Activated CD8-positive, alpha-beta memory T cell treated with anti-CD3 and anti-CD28 coated beads, Interleukin-2, amount 10 ng/mL, durations not matched to agents 7 days and 5 days (primary cell): ENCODE measurements at regions of chr13 and their contacts with region 1.

Region 1: GRCh38 chr13:48580185-48580803 is 47.4 kb upstream of the RCBTB2 start:
- DNase-seq: peak; percentile 80
- ATAC-seq: peak; percentile 51
- H3K4me3 Mint-ChIP-seq: no peak overlapping the region
- H3K27ac Mint-ChIP-seq: no peak overlapping the region
- H3K4me1 Mint-ChIP-seq: peaks cover 43% of the 10 kb centered on the region
- H3K27me3 Mint-ChIP-seq: peaks cover 44% of the 10 kb centered on the region

Region 2: GRCh38 chr13:48334534-48335127 is 245.7 kb before region 1 on chr13:
- CTCF ChIA-PET with region 1: interaction called, 110 read pairs
- DNase-seq: no peak
- ATAC-seq: peak; percentile 72
- H3K4me3 Mint-ChIP-seq: no peak overlapping the region
- H3K27ac Mint-ChIP-seq: no peak overlapping the region
- H3K4me1 Mint-ChIP-seq: peaks cover 21% of the 10 kb centered on the region
- H3K27me3 Mint-ChIP-seq: no peaks in the 10 kb centered on the region

Region 3: GRCh38 chr13:48492470-48493065 is 87.7 kb before region 1 on chr13:
- CTCF ChIA-PET with region 1: interaction called, 32 read pairs
- DNase-seq: peak; percentile 92
- ATAC-seq: peak; percentile 85
- H3K4me3 Mint-ChIP-seq: no peak overlapping the region
- H3K27ac Mint-ChIP-seq: no peak overlapping the region
- H3K4me1 Mint-ChIP-seq: peaks cover 63% of the 10 kb centered on the region
- H3K27me3 Mint-ChIP-seq: no peaks in the 10 kb centered on the region

Region 4: DNA sequence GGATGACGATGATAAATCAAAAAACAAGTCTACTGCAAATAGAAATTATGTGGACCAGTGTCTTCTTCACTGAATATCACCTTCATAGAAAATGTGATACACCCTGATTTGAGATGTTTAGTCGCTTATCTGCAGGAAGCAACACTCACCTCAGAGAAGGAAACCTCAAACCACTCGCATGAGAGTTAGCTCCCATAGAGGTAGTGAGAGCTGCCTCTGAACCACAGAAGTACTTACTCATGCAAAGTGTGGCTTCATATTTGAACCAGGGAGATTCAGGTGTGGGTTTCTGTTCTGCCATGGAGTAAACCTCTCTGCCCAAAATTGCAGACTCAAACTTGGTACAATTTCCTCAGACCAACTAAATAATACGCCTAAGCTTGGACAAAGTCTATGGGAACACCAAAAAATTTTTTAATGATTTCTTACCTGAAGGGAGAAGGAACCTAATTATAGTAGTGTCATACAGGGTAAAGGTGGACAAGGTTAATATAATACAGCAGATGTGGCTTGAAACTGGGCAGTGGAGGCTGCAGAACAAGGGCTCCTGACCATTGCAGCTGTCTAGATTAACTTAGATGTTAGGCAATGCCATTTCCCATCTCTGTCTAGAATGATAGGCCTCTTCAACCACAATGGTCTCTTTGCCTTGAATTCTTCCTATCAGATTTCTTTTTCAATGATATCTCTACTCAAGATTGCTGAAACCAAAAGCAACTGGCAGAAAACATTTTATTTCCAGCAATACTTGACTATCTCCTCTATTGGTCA is 17.8 kb before region 1 on chr13:
- CTCF ChIA-PET with region 1: interaction called, 42 read pairs
- DNase-seq: peak; percentile 95
- ATAC-seq: peak; percentile 92
- H3K4me3 Mint-ChIP-seq: peak overlapping the region; percentile 40
- H3K27ac Mint-ChIP-seq: peak overlapping the region; percentile 90
- H3K4me1 Mint-ChIP-seq: peaks cover 65% of the 10 kb centered on the region
- H3K27me3 Mint-ChIP-seq: peaks cover 35% of the 10 kb centered on the region

Region 5: DNA sequence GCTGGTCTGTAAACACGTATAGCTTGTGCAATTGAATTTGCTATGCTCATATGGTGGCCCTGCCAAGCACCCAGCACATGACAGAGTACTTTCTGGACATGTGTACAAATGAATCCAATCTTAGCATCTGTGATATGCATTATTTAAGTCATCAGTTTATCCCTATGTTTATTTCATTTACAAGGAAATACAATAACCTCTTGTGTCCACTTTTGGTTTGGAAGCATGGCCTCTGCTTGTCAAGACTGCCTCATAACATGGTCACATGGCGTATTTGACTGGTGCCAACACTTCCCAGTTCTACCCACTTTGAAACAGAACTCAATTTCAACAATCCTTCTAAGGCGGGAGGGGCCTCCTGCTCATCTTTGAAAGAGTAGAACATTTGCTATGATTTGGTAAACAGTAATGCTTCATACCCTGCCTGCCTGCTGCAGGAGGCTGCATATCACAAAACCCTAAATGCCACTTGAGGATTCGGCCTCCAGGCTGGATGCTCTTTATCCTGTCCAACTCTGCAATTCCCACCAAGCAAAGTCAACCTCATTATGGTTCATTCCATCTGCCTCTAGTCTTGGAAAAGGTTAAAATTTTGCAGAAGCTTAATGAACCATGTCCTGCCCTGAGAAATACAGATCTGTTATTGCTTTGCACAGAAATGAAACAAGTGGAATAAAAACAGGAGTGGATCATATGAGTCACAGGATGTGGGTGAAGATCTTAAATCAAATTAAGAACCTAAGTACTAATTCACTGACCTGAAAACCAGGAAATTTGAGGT is 224.7 kb after region 1 on chr13:
- CTCF ChIA-PET with region 1: no interaction called
- DNase-seq: no peak
- ATAC-seq: peak; percentile 84
- H3K4me3 Mint-ChIP-seq: no peak overlapping the region
- H3K27ac Mint-ChIP-seq: peak overlapping the region; percentile 81
- H3K4me1 Mint-ChIP-seq: peaks cover 26% of the 10 kb centered on the region
- H3K27me3 Mint-ChIP-seq: no peaks in the 10 kb centered on the region